Activated B cell treated with CpG ODN at 0.5 μM for 24 hours (primary cell): ENCODE measurements at regions of chr9 and their contacts with region 1.

Region 1: GRCh38 chr9:120792898-120793765 is at the start of gene FBXW2:
- DNase-seq: peak; percentile 87
- ATAC-seq: peak; percentile 91
- H3K4me3 Mint-ChIP-seq: peak within 1 kb of the TSS; percentile 91
- H3K27ac Mint-ChIP-seq: peak within 1 kb of the TSS; percentile 89
- H3K4me1 Mint-ChIP-seq: peaks cover 38% of the 10 kb centered on the region
- H3K27me3 Mint-ChIP-seq: no peaks in the 10 kb centered on the region
- CTCF ChIP-seq: no peak
- total RNA-seq, gene FBXW2: 70.4 and 77.9 TPM in 2 replicates

Region 2: GRCh38 chr9:120842690-120843499 is 49.8 kb after region 1 on chr9 and contains the start of gene PSMD5:
- CTCF ChIA-PET with region 1: no interaction called
- POLR2A ChIA-PET with region 1: interaction called, 4 read pairs
- intact Hi-C with region 1: loop called (anchors 1 kb)
- DNase-seq: peak; percentile 75
- ATAC-seq: peak; percentile 99
- H3K4me3 Mint-ChIP-seq: peak within 1 kb of the TSS; percentile 90
- H3K27ac Mint-ChIP-seq: peak within 1 kb of the TSS; percentile 91
- H3K4me1 Mint-ChIP-seq: peaks cover 42% of the 10 kb centered on the region
- H3K27me3 Mint-ChIP-seq: no peaks in the 10 kb centered on the region
- CTCF ChIP-seq: no peak
- total RNA-seq, gene PSMD5: 34.8 and 38.9 TPM in 2 replicates

Region 3: DNA sequence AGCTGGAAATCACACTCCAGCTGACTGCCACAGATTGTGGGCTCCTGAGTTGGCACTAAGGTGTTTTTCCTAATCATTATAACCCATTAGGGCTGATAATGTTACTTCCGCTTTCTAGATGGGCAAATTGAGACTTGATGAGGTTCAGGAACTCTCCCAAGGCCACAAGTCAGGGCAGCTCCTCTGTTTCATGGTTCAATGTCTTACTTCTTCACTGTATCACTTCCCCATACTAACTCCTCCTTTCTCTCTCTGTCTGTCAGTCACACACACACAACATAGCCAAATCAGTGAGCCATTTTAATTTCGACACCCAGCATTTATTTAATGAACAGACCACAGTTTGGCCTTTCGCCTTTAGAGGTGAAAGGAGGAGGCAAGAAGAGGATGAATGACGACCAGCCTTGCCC is 151.3 kb after region 1 on chr9:
- CTCF ChIA-PET with region 1: no interaction called
- POLR2A ChIA-PET with region 1: interaction called, 10 read pairs
- intact Hi-C with region 1: no loop called
- DNase-seq: no peak
- ATAC-seq: peak; percentile 100
- H3K4me3 Mint-ChIP-seq: peak overlapping the region; percentile 7
- H3K27ac Mint-ChIP-seq: peak overlapping the region; percentile 64
- H3K4me1 Mint-ChIP-seq: peaks cover 23% of the 10 kb centered on the region
- H3K27me3 Mint-ChIP-seq: no peaks in the 10 kb centered on the region
- CTCF ChIP-seq: no peak